ENCODE measurements at regions of chr20 and their contacts with region 1.

Region 1: DNA sequence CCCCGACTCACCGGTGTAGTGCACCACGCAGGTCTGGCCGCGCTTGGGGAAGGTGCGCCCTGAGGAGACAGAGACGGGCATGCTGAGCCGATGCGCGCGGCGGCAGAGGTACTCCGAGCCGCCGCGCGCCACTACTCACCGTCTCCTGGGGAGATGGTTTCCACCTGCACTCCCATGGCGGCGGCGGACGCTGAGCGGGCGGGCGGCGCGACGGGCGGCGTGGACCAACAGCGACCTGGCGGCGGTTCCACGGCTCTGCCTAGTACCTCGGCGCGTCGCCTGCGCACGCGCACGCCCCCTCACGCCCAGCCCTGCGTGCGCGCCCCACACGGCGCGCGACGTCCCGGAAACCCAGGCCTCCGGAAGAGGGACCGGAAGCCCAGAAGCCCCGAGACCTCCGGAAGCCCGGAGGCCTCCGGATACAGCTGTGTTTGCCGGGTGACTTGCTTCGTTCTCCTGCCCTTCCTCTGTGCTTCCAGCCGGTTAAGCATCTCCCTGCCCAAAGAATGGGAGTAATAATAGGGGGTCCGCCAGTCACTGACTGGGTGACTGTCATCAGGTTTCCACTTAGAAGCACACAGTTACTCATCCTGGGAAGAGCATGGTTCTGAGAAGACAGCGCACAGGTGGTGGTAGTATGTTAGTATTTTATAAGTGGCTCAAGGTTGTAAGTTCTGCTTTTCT is at the start of gene FKBP1A:
- DNase-seq: peak; percentile 91
- total RNA-seq, gene FKBP1A: 173 and 219 TPM in 2 replicates

Region 2: GRCh38 chr20:1325173-1326030 is 67.6 kb before region 1 on chr20:
- in situ Hi-C with region 1: loop called (anchors 10 kb)
- DNase-seq: peak; percentile 92

Region 3: DNA sequence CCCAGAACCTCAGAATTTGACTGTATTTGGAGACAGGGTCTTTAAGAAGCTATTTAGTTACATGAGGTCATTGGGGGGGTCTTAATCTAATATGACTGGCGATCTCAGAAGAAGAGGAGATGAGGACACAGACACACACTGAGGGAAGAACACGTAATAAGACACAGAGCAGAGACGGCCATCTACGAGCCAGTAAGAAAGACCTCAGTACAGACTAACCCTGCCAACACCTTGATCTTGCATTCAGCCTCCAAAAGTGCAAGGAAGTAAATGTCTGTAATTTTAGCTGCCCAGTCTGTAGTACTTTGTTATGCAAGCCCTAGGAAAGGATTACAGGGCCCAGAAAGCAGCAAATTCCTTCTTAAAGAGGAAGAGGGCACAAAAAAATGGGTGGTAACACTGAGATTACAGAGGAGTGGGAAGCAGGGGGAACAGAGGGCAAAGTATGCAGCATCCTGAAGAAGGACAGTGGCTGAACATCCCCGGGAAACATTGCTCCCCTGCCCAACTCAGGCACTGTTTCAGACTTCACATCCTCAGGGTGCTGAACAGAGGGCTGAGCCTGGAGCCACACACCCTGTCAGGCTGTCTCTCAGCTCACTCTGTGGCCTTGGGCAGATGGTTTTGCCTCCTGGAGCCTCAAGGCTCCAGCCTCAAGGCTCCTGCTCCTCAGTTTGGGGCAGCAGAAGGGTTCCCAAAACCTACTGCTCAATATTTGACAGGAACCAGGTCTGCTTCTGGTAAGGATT is 292.5 kb after region 1 on chr20:
- in situ Hi-C with region 1: no loop called
- DNase-seq: no peak

Measured in Caki2 (cell line).